Aorta (tissue), 5 donors: ENCODE measurements at regions of chr20 and their contacts with region 1.

Region 1: GRCh38 chr20:59222253-59223181 is 58.9 kb downstream of the ZNF831 start:
- DNase-seq: peak; percentile 78 to 93
- ATAC-seq: peak; percentile 95
- H3K4me3 ChIP-seq: peak overlapping the region; percentile 9 to 30
- H3K27ac ChIP-seq: no peak overlapping the region
- H3K4me1 ChIP-seq: no peaks in the 10 kb centered on the region
- H3K27me3 ChIP-seq: no peaks in the 10 kb centered on the region

Region 2: GRCh38 chr20:58870239-58871014 is 352.1 kb before region 1 on chr20:
- intact Hi-C with region 1: loop called (anchors 1 to 2 kb)
- DNase-seq: peak; percentile 79 to 85
- ATAC-seq: peak; percentile 79
- H3K4me3 ChIP-seq: no peak overlapping the region
- H3K27ac ChIP-seq: no peak overlapping the region
- H3K4me1 ChIP-seq: no peaks in the 10 kb centered on the region
- H3K27me3 ChIP-seq: no peaks in the 10 kb centered on the region

Region 3: GRCh38 chr20:59273739-59274357 is 51.3 kb after region 1 on chr20:
- intact Hi-C with region 1: no loop called
- DNase-seq: no peak
- ATAC-seq: no peak
- H3K4me3 ChIP-seq: no peak overlapping the region
- H3K27ac ChIP-seq: no peak overlapping the region
- H3K4me1 ChIP-seq: no peaks in the 10 kb centered on the region
- H3K27me3 ChIP-seq: peaks cover 0 to 3% of the 10 kb centered on the region in 2 donors

Region 4: DNA sequence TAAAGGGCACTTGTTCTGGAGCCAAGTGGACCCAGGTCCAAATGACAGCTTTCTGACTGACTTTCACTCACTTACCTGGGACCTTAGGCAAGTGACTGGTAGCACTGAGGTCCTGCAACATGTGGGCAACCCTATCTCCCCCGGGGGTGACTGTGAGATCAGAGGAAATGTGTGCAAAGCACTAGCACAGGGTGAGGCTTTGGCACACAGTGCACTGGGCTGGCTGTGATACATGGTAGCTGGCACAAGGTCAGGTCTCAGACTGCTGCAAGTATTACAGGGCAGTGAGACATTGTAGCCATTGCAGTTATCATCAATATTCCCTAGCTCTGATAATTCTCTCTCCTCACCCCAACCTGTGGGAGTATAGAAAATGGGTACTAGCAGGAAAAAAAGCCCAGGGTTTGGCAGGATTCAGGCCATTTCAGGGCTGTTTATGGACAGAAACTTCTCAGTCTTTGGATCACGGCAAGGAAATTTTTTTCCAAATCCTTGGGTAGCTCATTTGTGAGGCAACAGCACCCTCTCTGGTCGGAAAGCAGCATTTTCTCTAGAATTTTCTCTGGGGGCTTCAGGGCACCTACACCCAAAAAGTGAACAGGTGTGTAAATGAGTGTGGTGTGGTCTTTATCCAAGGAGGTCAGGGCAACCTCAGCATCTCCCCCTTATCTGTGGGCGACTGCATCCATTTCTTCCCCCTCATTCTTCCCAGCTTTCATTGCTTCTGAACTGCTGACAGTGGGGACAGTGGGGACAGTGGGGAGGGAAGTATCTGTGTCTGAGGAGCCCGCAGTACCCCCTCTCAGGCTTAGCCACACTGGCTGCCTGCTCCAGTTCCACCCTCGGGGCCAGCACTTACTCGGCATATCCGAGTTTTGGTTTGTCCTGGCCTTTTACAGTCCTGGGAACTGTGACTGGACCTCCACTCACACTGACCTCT is 233.2 kb after region 1 on chr20:
- intact Hi-C with region 1: loop called in 1 of 2 experiments (anchors 10 kb)
- DNase-seq: peak in 1 of 2 donors; percentile 53
- ATAC-seq: peak; percentile 56
- H3K4me3 ChIP-seq: no peak overlapping the region
- H3K27ac ChIP-seq: no peak overlapping the region
- H3K4me1 ChIP-seq: no peaks in the 10 kb centered on the region
- H3K27me3 ChIP-seq: no peaks in the 10 kb centered on the region